Activated naive CD4-positive, alpha-beta T cell treated with anti-CD3 and anti-CD28 coated beads, Interleukin-2, amount 10 ng/mL, durations not matched to agents 7 days and 5 days (primary cell): ENCODE measurements at regions of chr17 and their contacts with region 1.

Region 1: GRCh38 chr17:41548844-41549595 is 20.9 kb upstream of the KRT19 start:
- DNase-seq: peak; percentile 91
- H3K4me3 Mint-ChIP-seq: no peak overlapping the region
- H3K27ac Mint-ChIP-seq: peak overlapping the region; percentile 82
- H3K4me1 Mint-ChIP-seq: peaks cover 23% of the 10 kb centered on the region
- H3K27me3 Mint-ChIP-seq: peaks cover 46% of the 10 kb centered on the region

Region 2: DNA sequence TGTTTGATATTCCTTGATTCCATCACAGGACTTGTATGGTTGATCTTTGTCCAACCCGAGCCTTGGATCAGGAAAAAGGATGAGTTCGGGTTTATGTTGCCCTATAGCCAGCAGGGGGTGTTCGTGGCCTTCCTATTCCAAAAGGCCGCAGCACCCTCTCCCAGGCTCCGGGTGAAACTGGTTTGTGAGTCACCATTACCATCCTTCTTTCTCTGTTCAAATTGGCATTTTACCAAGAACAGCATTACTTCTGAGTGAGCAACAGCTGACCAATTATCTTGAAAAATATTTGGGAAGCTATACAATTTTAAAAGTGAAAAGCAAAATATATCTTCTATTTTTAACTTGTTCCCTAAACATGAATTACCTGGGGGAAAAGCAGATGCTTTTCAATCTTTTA is 639.7 kb before region 1 on chr17:
- CTCF ChIA-PET with region 1: interaction called, 30 read pairs
- DNase-seq: peak; percentile 70
- H3K4me3 Mint-ChIP-seq: no peak overlapping the region
- H3K27ac Mint-ChIP-seq: no peak overlapping the region
- H3K4me1 Mint-ChIP-seq: no peaks in the 10 kb centered on the region
- H3K27me3 Mint-ChIP-seq: peaks cover 34% of the 10 kb centered on the region

Region 3: DNA sequence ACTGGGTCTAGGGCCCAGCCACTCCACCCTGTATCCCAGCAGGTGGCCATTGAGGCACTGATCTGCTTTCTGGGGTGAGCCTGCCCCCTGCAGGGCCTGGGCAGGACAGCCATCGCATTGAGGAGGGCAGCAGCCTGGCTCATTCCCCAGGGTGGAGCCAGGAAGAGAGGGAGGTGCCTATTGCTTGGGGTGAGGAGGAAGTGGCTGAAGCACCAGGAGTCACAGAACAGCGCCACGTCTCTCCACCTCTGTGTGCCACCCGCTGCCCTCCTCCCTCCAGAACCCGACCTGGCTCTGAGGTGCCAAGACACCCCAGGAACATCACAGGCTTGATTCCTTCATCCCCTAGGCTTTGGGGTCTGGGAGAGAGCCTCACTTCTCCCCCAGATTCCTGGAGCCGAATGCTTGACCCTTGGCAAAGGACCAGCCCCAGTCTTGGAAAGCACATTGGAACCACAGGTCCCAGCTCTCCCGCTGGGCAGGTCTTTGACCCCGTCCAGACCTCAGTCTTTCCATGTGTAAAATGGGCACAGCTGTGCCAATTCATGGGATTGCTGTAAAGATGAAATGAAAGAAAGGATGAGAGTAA is 52.1 kb before region 1 on chr17:
- CTCF ChIA-PET with region 1: interaction called, 10 read pairs
- DNase-seq: peak; percentile 84
- H3K4me3 Mint-ChIP-seq: no peak overlapping the region
- H3K27ac Mint-ChIP-seq: peak overlapping the region; percentile 43
- H3K4me1 Mint-ChIP-seq: peaks cover 7% of the 10 kb centered on the region
- H3K27me3 Mint-ChIP-seq: peaks cover 22% of the 10 kb centered on the region

Region 4: GRCh38 chr17:41538565-41538991 is 10.4 kb before region 1 on chr17:
- CTCF ChIA-PET with region 1: interaction called, 17 read pairs
- DNase-seq: no peak
- H3K4me3 Mint-ChIP-seq: no peak overlapping the region
- H3K27ac Mint-ChIP-seq: no peak overlapping the region
- H3K4me1 Mint-ChIP-seq: no peaks in the 10 kb centered on the region
- H3K27me3 Mint-ChIP-seq: peaks cover 42% of the 10 kb centered on the region

Region 5: DNA sequence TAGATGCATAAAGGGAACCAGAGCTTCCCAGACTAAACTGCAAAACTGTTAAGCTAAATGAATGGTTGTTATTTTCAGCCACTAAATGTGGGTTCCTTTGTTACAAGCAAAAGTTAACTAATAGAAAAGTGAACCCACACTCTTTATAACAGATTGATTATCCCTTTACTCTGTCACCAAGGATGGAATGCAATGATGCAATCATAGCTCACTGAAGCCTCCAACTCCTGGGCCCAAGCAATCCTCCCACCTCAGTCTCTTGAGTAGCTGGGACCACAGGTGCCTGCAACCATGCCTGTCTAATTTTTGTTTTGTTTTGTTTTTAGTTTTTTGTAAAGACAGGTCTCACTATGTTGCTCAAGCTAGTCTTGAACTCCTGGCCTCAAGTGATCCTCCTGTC is 16.3 kb after region 1 on chr17:
- CTCF ChIA-PET with region 1: interaction called, 33 read pairs
- DNase-seq: no peak
- H3K4me3 Mint-ChIP-seq: no peak overlapping the region
- H3K27ac Mint-ChIP-seq: no peak overlapping the region
- H3K4me1 Mint-ChIP-seq: peaks cover 8% of the 10 kb centered on the region
- H3K27me3 Mint-ChIP-seq: peaks cover 58% of the 10 kb centered on the region

Region 6: GRCh38 chr17:41648411-41649195 is 99.6 kb after region 1 on chr17:
- CTCF ChIA-PET with region 1: interaction called, 142 read pairs
- DNase-seq: peak; percentile 88
- H3K4me3 Mint-ChIP-seq: peak overlapping the region; percentile 46
- H3K27ac Mint-ChIP-seq: no peak overlapping the region
- H3K4me1 Mint-ChIP-seq: peaks cover 10% of the 10 kb centered on the region
- H3K27me3 Mint-ChIP-seq: peaks cover 20% of the 10 kb centered on the region